GM10248 (cell line): ENCODE measurements at regions of chr12 and their contacts with region 1.

Region 1: GRCh38 chr12:50187084-50187900 is 20.1 kb upstream of the CERS5 start:
- DNase-seq: peak; percentile 52
- CTCF ChIP-seq: no peak

Region 2: GRCh38 chr12:50174971-50175715 is 12.1 kb before region 1 on chr12:
- CTCF ChIA-PET with region 1: interaction called, 10 read pairs
- POLR2A ChIA-PET with region 1: no interaction called
- DNase-seq: peak; percentile 39
- CTCF ChIP-seq: peak; percentile 38

Region 3: DNA sequence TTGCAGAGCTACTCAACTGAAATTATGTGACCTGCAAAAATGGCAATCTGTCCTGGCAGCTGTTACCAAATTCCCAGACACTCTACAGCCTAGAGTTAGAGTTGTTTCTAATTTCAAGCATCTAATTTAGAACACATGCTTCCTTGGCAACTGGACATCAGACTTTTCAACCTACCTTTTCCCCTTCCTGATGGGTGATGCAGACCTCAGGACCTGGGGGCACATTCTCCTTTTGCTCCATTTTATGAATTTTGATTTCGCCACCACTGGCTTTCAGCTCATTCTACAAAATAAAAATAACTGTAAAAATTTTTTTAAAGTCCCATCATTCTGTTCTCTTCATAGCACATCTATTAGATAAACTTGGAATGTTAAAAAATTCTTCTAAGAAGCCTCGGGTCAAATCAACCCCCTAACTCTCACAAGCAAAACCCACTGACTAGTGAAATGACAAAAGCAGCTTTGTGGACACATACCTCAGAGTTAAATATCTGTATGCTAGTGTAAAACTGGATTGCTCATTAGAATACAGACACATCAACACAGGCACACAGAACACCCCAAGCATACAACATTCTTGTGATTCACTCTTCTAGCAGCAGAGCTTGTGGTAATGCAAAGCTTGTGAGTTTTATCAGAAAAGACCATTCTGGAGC is 13.4 kb after region 1 on chr12:
- CTCF ChIA-PET with region 1: interaction called, 12 read pairs
- POLR2A ChIA-PET with region 1: no interaction called
- DNase-seq: no peak
- CTCF ChIP-seq: no peak

Region 4: DNA sequence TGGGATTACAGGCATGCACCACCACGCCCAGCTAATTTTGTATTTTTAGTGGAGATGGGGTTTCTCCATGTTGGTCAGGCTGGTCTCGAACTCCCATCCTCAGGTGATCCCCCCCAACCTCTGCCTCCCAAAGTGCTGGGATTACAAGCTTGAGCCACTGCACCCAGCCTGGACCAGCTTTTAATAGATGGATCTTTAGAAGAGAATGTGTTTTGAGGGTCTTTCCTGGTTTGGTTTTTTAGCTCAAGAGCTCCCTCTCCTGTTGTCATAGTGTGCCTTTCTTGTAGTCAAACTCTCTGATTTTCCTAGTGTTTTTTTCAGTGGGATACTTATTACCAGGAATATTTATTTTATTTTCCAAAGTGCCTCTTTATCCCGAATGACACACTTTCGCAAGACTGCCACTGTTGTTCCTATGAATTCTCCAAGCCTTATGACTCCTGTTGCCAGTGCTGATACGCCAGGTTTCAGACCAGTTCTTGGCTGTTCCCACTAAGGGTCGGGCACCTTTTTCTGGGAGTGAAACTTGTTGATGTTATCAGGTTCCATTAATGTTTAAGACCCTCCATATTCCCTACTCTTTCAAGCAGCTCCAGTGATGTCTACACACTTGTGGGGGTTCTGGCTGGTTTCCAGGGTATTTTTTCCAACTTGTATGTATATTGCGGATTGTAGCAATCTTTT is 127.5 kb after region 1 on chr12:
- CTCF ChIA-PET with region 1: interaction called, 18 read pairs
- POLR2A ChIA-PET with region 1: no interaction called
- DNase-seq: peak; percentile 57
- CTCF ChIP-seq: peak; percentile 50